ENCODE measurements at regions of chr15 and their contacts with region 1.

Region 1: GRCh38 chr15:59329570-59330350 is 42.9 kb downstream of the MYO1E start:
- DNase-seq: no peak
- ATAC-seq: no peak
- H3K4me3 ChIP-seq: no peak overlapping the region
- H3K4me3 Mint-ChIP-seq: peak overlapping the region; percentile 52
- H3K27ac ChIP-seq: no peak overlapping the region
- H3K27ac Mint-ChIP-seq: no peak overlapping the region
- H3K4me1 ChIP-seq: peaks cover 67 to 74% of the 10 kb centered on the region in 2 donors
- H3K4me1 Mint-ChIP-seq: peaks cover 84% of the 10 kb centered on the region
- H3K27me3 ChIP-seq: no peaks in the 10 kb centered on the region
- H3K27me3 Mint-ChIP-seq: no peaks in the 10 kb centered on the region
- CTCF ChIP-seq: no peak

Region 2: DNA sequence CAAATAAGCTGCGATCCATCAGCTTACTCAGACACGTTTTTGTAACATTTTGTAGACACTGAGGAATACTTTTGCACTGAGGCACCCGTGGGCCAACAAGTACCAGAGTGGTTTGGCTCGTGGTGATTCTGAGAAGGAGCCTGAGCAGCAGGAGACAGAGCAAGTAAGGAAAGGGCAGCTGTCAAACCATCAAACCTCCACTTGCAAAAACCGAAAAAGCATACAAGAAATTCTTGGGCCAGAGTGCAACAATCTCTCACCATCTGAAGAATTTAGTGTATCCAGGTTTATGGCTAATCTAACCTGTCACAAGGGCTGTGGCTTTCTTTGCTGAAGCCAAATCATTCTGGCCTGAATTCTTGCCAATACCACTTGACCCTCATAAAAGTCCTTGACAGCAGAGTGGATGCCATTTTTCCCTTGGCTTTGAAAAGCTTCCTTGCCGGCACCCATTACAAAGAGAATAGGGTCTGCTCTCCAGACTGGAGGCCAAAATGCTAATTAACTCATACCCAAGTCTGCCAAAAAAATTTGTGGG is 13.8 kb before region 1 on chr15:
- CTCF ChIA-PET with region 1: interaction called, 5 read pairs
- POLR2A ChIA-PET with region 1: interaction called, 4 read pairs
- intact Hi-C with region 1: loop called (anchors 2 kb)
- DNase-seq: no peak
- ATAC-seq: no peak
- H3K4me3 ChIP-seq: no peak overlapping the region
- H3K4me3 Mint-ChIP-seq: no peak overlapping the region
- H3K27ac ChIP-seq: no peak overlapping the region
- H3K27ac Mint-ChIP-seq: no peak overlapping the region
- H3K4me1 ChIP-seq: peaks cover 44 to 46% of the 10 kb centered on the region in 2 donors
- H3K4me1 Mint-ChIP-seq: peaks cover 63% of the 10 kb centered on the region
- H3K27me3 ChIP-seq: no peaks in the 10 kb centered on the region
- H3K27me3 Mint-ChIP-seq: no peaks in the 10 kb centered on the region
- CTCF ChIP-seq: no peak

Region 3: GRCh38 chr15:59349680-59350420 is 20.1 kb after region 1 on chr15:
- CTCF ChIA-PET with region 1: interaction called, 4 read pairs
- POLR2A ChIA-PET with region 1: interaction called, 9 read pairs
- intact Hi-C with region 1: loop called (anchors 2 kb)
- DNase-seq: no peak
- ATAC-seq: no peak
- H3K4me3 ChIP-seq: no peak overlapping the region
- H3K4me3 Mint-ChIP-seq: no peak overlapping the region
- H3K27ac ChIP-seq: peak overlapping the region in 1 of 2 donors; percentile 49
- H3K27ac Mint-ChIP-seq: peak overlapping the region; percentile 43
- H3K4me1 ChIP-seq: peaks cover 65 to 69% of the 10 kb centered on the region in 2 donors
- H3K4me1 Mint-ChIP-seq: peaks cover 77% of the 10 kb centered on the region
- H3K27me3 ChIP-seq: no peaks in the 10 kb centered on the region
- H3K27me3 Mint-ChIP-seq: no peaks in the 10 kb centered on the region
- CTCF ChIP-seq: no peak

Region 4: DNA sequence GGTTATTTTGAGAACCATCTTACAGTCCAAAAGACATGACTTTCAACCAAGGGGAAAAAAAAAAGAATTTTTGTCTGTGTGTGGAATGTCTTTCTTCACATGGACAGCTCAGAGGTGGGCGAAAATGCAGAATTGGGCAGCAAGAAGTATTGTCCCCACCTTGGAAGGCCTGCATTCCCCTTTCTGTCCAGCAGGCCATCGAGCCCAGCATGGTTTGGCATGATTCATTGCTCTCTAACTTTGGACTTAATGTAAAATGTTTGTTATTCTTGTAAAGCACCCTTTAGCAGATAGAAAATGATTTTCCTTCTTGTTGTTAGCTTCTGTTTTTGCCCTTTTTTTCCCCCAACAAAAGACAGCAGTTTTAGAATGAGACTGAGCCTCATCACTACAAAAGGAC is 30.5 kb after region 1 on chr15:
- CTCF ChIA-PET with region 1: no interaction called
- POLR2A ChIA-PET with region 1: interaction called, 4 read pairs
- intact Hi-C with region 1: loop called (anchors 5 kb)
- DNase-seq: no peak
- ATAC-seq: no peak
- H3K4me3 ChIP-seq: no peak overlapping the region
- H3K4me3 Mint-ChIP-seq: no peak overlapping the region
- H3K27ac ChIP-seq: peak overlapping the region in 1 of 2 donors; percentile 27
- H3K27ac Mint-ChIP-seq: peak overlapping the region; percentile 54
- H3K4me1 ChIP-seq: peaks cover 11 to 16% of the 10 kb centered on the region in 2 donors
- H3K4me1 Mint-ChIP-seq: peaks cover 49% of the 10 kb centered on the region
- H3K27me3 ChIP-seq: no peaks in the 10 kb centered on the region
- H3K27me3 Mint-ChIP-seq: no peaks in the 10 kb centered on the region
- CTCF ChIP-seq: peak; percentile 45